GM12878 (cell line): ENCODE measurements at regions of chrX and their contacts with region 1.

Region 1: GRCh38 chrX:14029425-14030173 is at the start of gene GEMIN8:
- DNase-seq: peak; percentile 46
- ATAC-seq: peak; percentile 84
- H3K4me3 ChIP-seq: peak within 1 kb of the TSS; percentile 81
- H3K27ac ChIP-seq: peak within 1 kb of the TSS; percentile 77
- H3K4me1 ChIP-seq: peaks cover 6% of the 10 kb centered on the region
- H3K27me3 ChIP-seq: no peaks in the 10 kb centered on the region
- CTCF ChIP-seq: no peak
- EP300 ChIP-seq: 0 out of 4 replicates have a peak, but pooled peaks of 1 of the 2 experiments have one; percentile 4
- POLR2A ChIP-seq: peak; percentile 91
- RAD21 ChIP-seq: no peak
- polyA plus RNA-seq, gene GEMIN8: 18.4 to 29.5 TPM

Region 2: DNA sequence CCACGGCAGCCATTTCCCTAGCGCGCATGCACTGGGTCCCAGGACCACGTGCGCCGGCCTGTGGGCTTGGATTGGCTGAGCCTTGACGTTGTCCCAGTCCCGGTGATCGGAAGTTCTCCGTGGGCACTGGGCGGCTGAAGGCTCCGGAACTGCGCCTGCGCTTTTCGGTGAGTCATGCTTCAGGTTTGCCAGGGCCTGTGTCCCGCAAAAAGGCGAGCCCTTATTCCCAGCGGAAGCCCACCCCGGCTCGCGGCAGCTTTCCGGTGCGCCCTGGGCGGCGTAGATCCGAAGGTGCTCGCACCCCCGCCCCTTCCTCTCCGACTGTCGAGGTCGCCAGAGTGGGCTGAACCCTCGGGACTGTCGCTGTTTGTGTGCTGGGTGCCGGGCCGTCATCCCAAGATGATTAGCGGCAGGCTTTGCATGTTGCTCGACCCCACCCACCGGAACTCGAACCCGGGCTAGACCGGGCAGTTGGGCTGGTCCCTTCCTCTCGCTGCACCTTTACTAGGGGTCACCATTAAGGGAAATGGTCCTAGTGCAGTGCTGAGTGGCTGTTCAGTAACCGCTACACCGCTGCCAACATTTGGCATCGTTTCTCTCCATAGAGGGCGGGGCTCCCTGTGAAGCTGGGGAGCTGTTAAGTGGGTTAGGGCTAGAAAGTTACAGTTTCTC is 376.4 kb before region 1 on chrX and contains the start of gene TCEANC:
- CTCF ChIA-PET with region 1: interaction called, 7 read pairs
- POLR2A ChIA-PET with region 1: no interaction called
- RAD21 ChIA-PET with region 1: interaction called, 4 read pairs
- SMC1A ChIA-PET with region 1: interaction called, 6 read pairs
- in situ Hi-C with region 1: loop called (anchors 5 kb)
- intact Hi-C with region 1: loop called (anchors 1 kb)
- DNase-seq: peak; percentile 89
- ATAC-seq: peak; percentile 98
- H3K4me3 ChIP-seq: peak within 1 kb of the TSS; percentile 76
- H3K27ac ChIP-seq: peak within 1 kb of the TSS; percentile 71
- H3K4me1 ChIP-seq: peaks cover 7% of the 10 kb centered on the region
- H3K27me3 ChIP-seq: no peaks in the 10 kb centered on the region
- CTCF ChIP-seq: no peak
- EP300 ChIP-seq: no peak
- POLR2A ChIP-seq: peak; percentile 85
- RAD21 ChIP-seq: no peak
- polyA plus RNA-seq, gene TCEANC: 1.5 to 4.0 TPM

Region 3: DNA sequence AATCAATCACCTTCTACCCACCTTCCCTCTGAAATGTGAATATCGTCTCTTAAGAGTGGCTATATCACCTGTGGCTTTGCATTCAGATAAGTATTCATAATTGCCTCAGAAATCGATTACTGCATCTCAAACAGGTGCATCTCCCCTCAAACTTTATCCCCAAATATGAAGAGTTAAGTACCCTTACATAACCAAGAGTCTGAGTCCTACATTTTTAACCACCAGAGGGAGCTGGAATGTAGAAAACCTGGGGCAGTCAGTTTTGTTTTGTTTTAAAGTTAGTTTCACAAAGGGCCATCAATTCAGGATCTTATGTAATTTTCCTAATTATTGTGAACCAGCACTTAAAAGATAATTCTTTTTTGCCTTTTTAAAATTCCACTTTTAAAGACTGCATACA is 371.0 kb before region 1 on chrX:
- CTCF ChIA-PET with region 1: interaction called, 7 read pairs
- POLR2A ChIA-PET with region 1: interaction called, 4 read pairs
- RAD21 ChIA-PET with region 1: interaction called, 4 read pairs
- SMC1A ChIA-PET with region 1: interaction called, 7 read pairs
- in situ Hi-C with region 1: loop called (anchors 5 kb)
- intact Hi-C with region 1: loop called (anchors 1 kb)
- DNase-seq: no peak
- ATAC-seq: peak; percentile 66
- H3K4me3 ChIP-seq: no peak overlapping the region
- H3K27ac ChIP-seq: peak overlapping the region; percentile 73
- H3K4me1 ChIP-seq: peaks cover 14% of the 10 kb centered on the region
- H3K27me3 ChIP-seq: no peaks in the 10 kb centered on the region
- CTCF ChIP-seq: peak; percentile 59 to 72 (median 68)
- EP300 ChIP-seq: no peak
- POLR2A ChIP-seq: no peak
- RAD21 ChIP-seq: peak; percentile 93

Region 4: GRCh38 chrX:13764765-13765164 is 264.8 kb before region 1 on chrX:
- CTCF ChIA-PET with region 1: interaction called, 6 read pairs
- POLR2A ChIA-PET with region 1: interaction called, 5 read pairs
- RAD21 ChIA-PET with region 1: interaction called, 5 read pairs
- SMC1A ChIA-PET with region 1: interaction called, 15 read pairs
- in situ Hi-C with region 1: no loop called
- intact Hi-C with region 1: no loop called
- DNase-seq: no peak
- ATAC-seq: no peak
- H3K4me3 ChIP-seq: no peak overlapping the region
- H3K27ac ChIP-seq: no peak overlapping the region
- H3K4me1 ChIP-seq: peaks cover 14% of the 10 kb centered on the region
- H3K27me3 ChIP-seq: no peaks in the 10 kb centered on the region
- CTCF ChIP-seq: no peak
- EP300 ChIP-seq: no peak
- POLR2A ChIP-seq: no peak
- RAD21 ChIP-seq: no peak

Region 5: GRCh38 chrX:13851996-13852695 is 177.5 kb before region 1 on chrX:
- CTCF ChIA-PET with region 1: interaction called, 3 read pairs
- POLR2A ChIA-PET with region 1: interaction called, 4 read pairs
- RAD21 ChIA-PET with region 1: no interaction called
- SMC1A ChIA-PET with region 1: no interaction called
- in situ Hi-C with region 1: no loop called
- intact Hi-C with region 1: loop called (anchors 5 kb)
- DNase-seq: no peak
- ATAC-seq: peak; percentile 90
- H3K4me3 ChIP-seq: no peak overlapping the region
- H3K27ac ChIP-seq: no peak overlapping the region
- H3K4me1 ChIP-seq: peaks cover 5% of the 10 kb centered on the region; the same call in 1 of the 2 replicates
- H3K27me3 ChIP-seq: no peaks in the 10 kb centered on the region
- CTCF ChIP-seq: peak; percentile 39 to 47 (median 44)
- EP300 ChIP-seq: no peak
- POLR2A ChIP-seq: no peak
- RAD21 ChIP-seq: peak; percentile 27

Region 6: DNA sequence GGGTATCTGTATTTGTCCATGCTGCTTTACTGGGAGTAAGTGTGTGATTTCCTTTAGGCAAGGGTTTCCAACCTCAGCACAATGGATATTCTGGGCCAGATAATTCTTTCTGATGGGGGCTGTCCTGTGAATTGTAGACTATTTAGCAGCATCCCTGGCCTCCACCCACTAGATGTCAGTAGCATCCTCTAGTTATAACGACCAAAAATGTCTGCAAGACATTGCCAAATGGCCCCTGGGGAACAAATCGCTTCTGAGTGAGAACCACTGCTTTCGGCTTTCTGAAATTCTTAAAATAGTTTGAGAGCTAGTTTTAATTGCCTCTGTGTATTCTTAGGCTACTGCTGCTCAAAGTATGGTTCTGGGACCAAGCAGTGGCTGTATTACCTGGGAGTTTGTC is 131.5 kb before region 1 on chrX:
- CTCF ChIA-PET with region 1: interaction called, 28 read pairs
- POLR2A ChIA-PET with region 1: interaction called, 7 read pairs
- RAD21 ChIA-PET with region 1: interaction called, 26 read pairs
- SMC1A ChIA-PET with region 1: interaction called, 28 read pairs
- in situ Hi-C with region 1: loop called (anchors 10 kb)
- intact Hi-C with region 1: loop called (anchors 1 kb)
- DNase-seq: peak; percentile 13
- ATAC-seq: peak; percentile 98
- H3K4me3 ChIP-seq: no peak overlapping the region
- H3K27ac ChIP-seq: no peak overlapping the region
- H3K4me1 ChIP-seq: no peaks in the 10 kb centered on the region
- H3K27me3 ChIP-seq: no peaks in the 10 kb centered on the region; a peak in 2 of 4 replicates
- CTCF ChIP-seq: peak; percentile 57 to 66 (median 58)
- EP300 ChIP-seq: no peak
- POLR2A ChIP-seq: no peak
- RAD21 ChIP-seq: peak; percentile 70

Region 7: GRCh38 chrX:15014281-15014680 is 984.7 kb after region 1 on chrX:
- CTCF ChIA-PET with region 1: no interaction called
- POLR2A ChIA-PET with region 1: no interaction called
- RAD21 ChIA-PET with region 1: no interaction called
- SMC1A ChIA-PET with region 1: no interaction called
- in situ Hi-C with region 1: no loop called
- intact Hi-C with region 1: no loop called
- DNase-seq: no peak
- ATAC-seq: no peak
- H3K4me3 ChIP-seq: no peak overlapping the region
- H3K27ac ChIP-seq: no peak overlapping the region
- H3K4me1 ChIP-seq: no peaks in the 10 kb centered on the region
- H3K27me3 ChIP-seq: no peaks in the 10 kb centered on the region
- CTCF ChIP-seq: no peak
- EP300 ChIP-seq: no peak
- POLR2A ChIP-seq: no peak
- RAD21 ChIP-seq: no peak